Activated B cell treated with CpG ODN at 0.5 μM for 24 hours (primary cell): ENCODE measurements at regions of chr5 and their contacts with region 1.

Region 1: DNA sequence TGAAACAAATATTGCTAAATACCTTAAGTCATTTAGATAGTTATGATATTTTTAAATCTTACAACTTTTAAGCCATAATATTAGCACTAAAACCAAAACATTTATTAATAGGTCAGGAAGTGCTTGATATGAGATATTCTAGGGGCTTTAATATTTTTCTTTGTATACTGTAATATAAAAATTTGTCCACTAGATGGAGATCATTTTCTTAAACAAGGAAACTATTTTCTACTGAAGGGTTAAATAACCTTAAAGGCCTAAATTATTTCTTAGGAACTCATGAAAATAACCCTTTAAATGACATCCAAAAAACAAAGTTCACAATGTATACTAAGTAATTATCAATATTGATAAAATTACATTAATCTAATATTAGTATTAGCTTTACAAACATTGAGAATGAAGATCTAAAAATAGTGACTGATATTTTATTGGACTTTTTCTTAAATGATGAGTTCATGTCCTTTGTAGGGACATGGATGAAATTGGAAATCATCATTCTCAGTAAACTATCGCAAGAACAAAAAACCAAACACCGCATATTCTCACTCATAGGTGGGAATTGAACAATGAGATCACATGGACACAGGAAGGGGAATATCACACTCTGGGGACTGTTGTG is 635.7 kb downstream of the RAB3C start:
- DNase-seq: no peak
- ATAC-seq: no peak
- H3K4me3 Mint-ChIP-seq: no peak overlapping the region
- H3K27ac Mint-ChIP-seq: no peak overlapping the region
- H3K4me1 Mint-ChIP-seq: peaks cover 3% of the 10 kb centered on the region
- H3K27me3 Mint-ChIP-seq: no peaks in the 10 kb centered on the region
- CTCF ChIP-seq: no peak

Region 2: DNA sequence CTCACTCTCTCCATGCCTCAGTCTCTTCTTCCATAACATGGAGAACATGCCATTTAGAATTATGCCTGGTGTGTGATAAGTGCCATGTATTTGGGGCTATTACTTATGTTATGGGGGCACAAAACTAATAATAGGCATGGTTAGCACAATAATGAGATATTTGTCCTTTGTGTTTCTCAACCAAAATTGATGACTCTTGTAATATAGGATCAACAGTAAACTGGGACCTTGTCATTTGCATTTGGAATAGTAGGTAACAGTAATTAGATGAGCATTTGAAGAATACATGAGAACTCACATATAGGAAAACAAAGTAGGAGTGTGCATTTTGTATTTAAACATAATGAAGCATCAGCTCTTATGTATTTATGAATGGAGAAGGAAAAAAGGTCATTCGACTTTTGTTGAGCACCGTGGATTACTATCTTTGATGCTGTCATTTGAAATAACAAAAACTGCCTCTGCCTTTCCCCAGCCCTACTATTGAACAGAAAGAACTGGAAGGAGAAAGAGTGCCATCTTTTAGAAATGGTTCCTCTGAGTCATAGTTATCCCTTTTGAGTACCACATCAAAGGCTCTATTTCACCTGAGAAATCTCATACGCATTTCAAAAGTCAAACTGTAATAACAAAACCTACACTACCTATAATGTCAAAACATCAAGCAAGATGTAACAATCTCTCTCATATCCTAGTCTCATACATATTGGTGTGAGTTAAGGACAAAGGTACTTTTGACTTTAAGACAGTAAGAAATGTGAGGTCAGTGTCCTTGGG is 19.8 kb after region 1 on chr5:
- CTCF ChIA-PET with region 1: no interaction called
- POLR2A ChIA-PET with region 1: no interaction called
- intact Hi-C with region 1: no loop called
- DNase-seq: no peak
- ATAC-seq: no peak
- H3K4me3 Mint-ChIP-seq: no peak overlapping the region
- H3K27ac Mint-ChIP-seq: no peak overlapping the region
- H3K4me1 Mint-ChIP-seq: peaks cover 1% of the 10 kb centered on the region
- H3K27me3 Mint-ChIP-seq: no peaks in the 10 kb centered on the region
- CTCF ChIP-seq: no peak

Region 3: DNA sequence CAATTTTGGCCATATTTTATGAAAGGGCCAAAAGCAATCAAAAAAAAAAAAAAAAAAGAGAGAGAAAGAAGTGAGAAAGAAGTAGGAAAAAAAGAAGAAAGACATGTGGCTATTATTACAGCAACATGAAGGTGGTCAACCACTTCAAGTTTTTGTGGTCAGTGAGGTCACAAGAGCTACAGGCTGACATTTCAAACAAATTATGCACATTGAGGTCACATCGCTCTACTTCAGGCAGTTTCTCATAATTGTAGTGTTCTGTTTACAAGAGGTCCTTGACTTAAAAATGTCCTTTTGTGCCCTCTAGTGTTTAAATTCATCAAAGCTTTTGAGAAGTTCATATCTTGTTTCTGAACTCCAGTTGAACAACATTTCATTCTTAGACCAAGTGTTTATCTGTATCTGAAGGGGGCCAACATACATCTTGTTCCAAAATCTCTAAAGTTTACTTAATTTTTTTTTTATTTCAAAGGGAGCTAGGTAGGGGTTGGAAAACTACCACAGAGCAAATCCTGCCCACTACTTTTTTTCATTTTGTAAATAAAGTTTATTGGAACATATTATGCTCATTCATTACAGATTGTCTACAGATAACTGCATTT is 161.9 kb after region 1 on chr5:
- CTCF ChIA-PET with region 1: interaction called, 6 read pairs
- POLR2A ChIA-PET with region 1: no interaction called
- intact Hi-C with region 1: loop called (anchors 1 kb)
- DNase-seq: no peak
- ATAC-seq: peak; percentile 52
- H3K4me3 Mint-ChIP-seq: no peak overlapping the region
- H3K27ac Mint-ChIP-seq: no peak overlapping the region
- H3K4me1 Mint-ChIP-seq: peaks cover 4% of the 10 kb centered on the region
- H3K27me3 Mint-ChIP-seq: no peaks in the 10 kb centered on the region
- CTCF ChIP-seq: no peak